KBM-7 (cell line): ENCODE measurements at regions of chr5 and their contacts with region 1.

Region 1: DNA sequence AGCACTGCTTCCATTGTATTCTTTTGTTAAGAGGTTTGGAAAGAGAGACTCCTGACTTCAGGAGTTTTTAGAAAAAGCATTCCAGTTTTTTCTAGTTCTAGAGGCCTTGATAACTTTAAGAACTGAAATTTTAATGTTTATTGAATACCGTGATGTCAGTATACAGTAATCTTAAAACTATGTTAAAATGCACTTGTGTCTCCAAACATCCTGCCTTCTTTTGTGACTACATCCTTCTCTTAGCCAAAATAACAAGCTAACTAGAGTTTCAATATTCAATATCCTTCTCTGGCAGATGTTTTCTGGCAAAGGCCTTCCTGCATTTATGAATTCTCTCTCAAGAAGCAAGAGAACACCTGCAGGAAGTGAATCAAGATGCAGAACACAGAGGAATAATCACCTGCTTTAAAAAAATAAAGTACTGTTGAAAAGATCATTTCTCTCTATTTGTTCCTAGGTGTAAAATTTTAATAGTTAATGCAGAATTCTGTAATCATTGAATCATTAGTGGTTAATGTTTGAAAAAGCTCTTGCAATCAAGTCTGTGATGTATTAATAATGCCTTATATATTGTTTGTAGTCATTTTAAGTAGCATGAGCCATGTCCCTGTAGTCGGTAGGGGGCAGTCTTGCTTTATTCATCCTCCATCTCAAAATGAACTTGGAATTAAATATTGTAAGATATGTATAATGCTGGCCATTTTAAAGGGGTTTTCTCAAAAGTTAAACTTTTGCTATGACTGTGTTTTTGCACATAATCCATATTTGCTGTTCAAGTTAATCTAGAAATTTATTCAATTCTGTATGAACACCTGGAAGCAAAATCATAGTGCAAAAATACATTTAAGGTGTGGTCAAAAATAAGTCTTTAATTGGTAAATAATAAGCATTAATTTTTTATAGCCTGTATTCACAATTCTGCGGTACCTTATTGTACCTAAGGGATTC is 43.1 kb downstream of the NDFIP1 start:
- DNase-seq: peak; percentile 69

Region 2: GRCh38 chr5:141940695-141941271 is 210.9 kb before region 1 on chr5:
- in situ Hi-C with region 1: no loop called
- DNase-seq: no peak

Region 3: GRCh38 chr5:142600611-142601358 is 449.1 kb after region 1 on chr5:
- in situ Hi-C with region 1: no loop called
- DNase-seq: no peak

Region 4: DNA sequence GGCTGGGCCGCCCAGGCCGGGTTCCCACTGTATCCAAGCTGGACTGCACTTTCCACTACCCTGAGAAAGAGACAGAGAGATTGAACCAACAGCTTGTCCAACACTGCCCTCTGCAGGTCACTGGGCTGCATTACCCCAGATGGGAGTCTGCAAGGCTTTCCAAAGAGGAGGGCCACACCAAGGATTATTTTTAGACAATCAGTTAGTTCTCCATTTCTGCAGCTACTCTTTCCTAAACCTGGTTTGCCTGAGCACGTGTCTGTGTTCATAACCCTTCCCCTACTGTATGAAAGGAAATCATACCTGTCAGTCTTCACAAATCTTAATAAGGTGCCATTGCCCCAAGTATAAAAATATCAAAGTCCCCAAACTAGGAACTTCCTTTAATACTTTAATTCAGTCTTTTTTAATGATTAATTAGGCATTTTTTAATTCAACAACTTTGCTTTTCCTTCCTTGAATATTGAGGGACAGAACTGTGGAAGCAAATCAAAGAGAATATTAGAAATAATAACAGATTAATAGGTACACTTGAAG is 547.5 kb after region 1 on chr5:
- in situ Hi-C with region 1: loop called (anchors 25 kb)
- DNase-seq: peak; percentile 95